BJ (cell line): ENCODE measurements at regions of chr9 and their contacts with region 1.

Region 1: GRCh38 chr9:126490871-126491567 is 122.7 kb upstream of the LMX1B start:
- DNase-seq: no peak
- H3K4me3 ChIP-seq: no peak overlapping the region
- H3K27me3 ChIP-seq: no peaks in the 10 kb centered on the region
- CTCF ChIP-seq: peak; percentile 89

Region 2: DNA sequence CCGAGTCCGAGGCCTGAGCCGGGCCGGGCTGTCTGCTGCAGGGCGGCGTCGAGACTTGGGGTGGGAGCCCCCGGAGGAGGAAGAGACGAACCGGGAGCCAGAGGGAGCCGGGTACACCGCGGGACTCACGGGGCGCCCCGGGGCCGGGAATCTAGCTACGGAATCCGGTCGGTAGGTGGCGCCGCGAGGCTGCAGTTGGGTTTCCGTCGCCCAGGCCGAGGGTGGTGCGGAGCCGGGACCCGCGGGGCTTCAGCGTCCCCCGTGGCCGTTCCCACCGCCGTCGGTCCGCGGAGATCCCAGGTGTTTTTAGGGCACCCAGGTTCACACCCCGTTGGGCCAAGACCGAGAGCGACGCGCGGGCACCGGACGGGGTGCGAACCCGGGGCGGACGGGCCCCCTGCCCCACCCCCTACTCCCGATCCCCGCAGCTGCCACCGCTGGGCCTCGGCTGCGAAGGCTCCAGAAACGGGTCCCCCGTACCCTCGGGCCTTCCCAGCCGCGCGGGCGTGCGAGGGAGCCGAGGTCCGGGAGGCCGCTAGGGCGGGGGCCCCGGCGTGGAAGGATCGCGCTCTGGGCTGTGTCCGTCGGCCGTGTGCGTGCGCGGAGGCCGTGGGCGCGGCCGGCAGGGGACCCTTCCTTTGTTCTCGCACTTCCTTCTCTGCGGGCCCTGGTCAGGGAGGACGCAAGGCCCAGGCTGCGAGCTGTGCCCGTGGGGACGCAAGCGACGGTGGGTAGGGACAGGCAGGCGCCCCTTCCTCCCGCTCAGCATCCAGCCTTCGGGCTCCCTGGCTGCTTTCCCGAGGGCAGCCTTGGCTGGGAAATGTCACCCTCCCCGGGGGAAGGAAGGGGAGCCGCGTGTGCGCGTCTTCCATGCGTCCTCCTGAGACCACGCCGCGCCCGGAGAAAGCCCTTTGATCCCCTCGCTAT is 1082.8 kb before region 1 on chr9:
- CTCF ChIA-PET with region 1: interaction called, 16 read pairs
- POLR2A ChIA-PET with region 1: no interaction called
- DNase-seq: no peak
- H3K4me3 ChIP-seq: peak overlapping the region; percentile 70
- H3K27me3 ChIP-seq: no peaks in the 10 kb centered on the region; the same call in 1 of the 2 replicates
- CTCF ChIP-seq: peak; percentile 89

Region 3: DNA sequence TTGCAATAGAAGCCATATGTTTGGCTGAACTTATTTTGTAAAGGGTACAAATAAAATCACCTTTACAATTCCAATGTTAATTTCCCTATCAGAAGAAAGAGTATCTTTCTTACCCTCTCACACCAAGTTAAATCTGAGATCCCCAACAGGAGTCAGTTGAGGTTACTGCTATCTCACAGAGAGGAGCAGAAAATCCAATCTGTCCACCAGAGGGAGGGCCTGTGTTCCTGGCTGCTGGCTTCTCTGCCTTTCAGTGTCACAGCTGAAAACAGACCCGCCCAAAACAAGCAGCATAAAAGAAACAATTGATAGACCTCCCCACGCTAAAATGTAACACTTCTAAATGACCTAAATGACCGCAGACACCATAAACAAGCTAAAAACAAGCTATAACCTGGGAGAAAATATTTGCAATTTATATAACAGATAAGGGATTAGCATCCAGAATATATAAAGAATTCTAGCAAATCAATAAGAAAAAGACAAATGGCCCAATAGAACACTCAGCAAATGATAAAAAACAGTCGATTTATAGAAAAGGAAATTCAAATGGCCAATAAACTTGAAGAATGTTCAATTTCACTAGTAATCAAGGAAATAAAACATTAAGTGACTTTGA is 188.9 kb before region 1 on chr9:
- CTCF ChIA-PET with region 1: interaction called, 44 read pairs
- POLR2A ChIA-PET with region 1: no interaction called
- DNase-seq: peak; percentile 7
- H3K4me3 ChIP-seq: no peak overlapping the region
- H3K27me3 ChIP-seq: peaks cover 8% of the 10 kb centered on the region
- CTCF ChIP-seq: peak; percentile 88

Region 4: GRCh38 chr9:126307322-126308061 is 183.5 kb before region 1 on chr9:
- CTCF ChIA-PET with region 1: interaction called, 44 read pairs
- POLR2A ChIA-PET with region 1: no interaction called
- DNase-seq: no peak
- H3K4me3 ChIP-seq: no peak overlapping the region
- H3K27me3 ChIP-seq: peaks cover 3% of the 10 kb centered on the region
- CTCF ChIP-seq: no peak

Region 5: DNA sequence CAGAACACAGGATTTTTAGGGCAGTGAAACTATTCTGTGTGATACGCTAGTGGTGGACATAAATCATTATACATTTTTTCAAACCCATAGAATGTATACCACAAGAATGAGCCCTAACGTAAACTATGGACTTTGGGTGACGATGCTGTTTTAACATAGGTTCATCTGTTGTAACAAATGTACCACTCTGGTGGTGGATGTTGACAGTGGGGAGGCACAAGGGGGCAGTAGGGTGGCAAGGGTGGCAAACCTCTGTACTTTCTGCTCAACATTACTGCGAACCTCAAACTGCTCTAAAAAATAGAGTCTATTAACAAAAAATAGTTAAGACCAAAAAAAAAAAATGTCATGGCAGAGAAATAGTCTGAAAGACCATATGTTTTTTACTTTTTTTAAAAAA is 173.5 kb before region 1 on chr9:
- CTCF ChIA-PET with region 1: interaction called, 28 read pairs
- POLR2A ChIA-PET with region 1: no interaction called
- DNase-seq: no peak
- H3K4me3 ChIP-seq: no peak overlapping the region
- H3K27me3 ChIP-seq: peaks cover 2% of the 10 kb centered on the region; the same call in 1 of the 2 replicates
- CTCF ChIP-seq: peak; percentile 18; the same call in 1 of the 2 replicates

Region 6: GRCh38 chr9:126406075-126406667 is 84.8 kb before region 1 on chr9:
- CTCF ChIA-PET with region 1: interaction called, 44 read pairs
- POLR2A ChIA-PET with region 1: no interaction called
- DNase-seq: peak; percentile 75
- H3K4me3 ChIP-seq: no peak overlapping the region; the same call in 1 of the 2 replicates
- H3K27me3 ChIP-seq: no peaks in the 10 kb centered on the region
- CTCF ChIP-seq: no peak

Region 7: GRCh38 chr9:126471084-126471624 is 19.9 kb before region 1 on chr9:
- CTCF ChIA-PET with region 1: interaction called, 19 read pairs
- POLR2A ChIA-PET with region 1: no interaction called
- DNase-seq: no peak
- H3K4me3 ChIP-seq: no peak overlapping the region
- H3K27me3 ChIP-seq: no peaks in the 10 kb centered on the region
- CTCF ChIP-seq: no peak